Gastrocnemius medialis (tissue), 4 donors: ENCODE measurements at regions of chr2 and their contacts with region 1.

Region 1: GRCh38 chr2:72579591-72580180 is 246.1 kb downstream of the EXOC6B start:
- DNase-seq: no peak
- ATAC-seq: peak in 1 of 2 donors; percentile 71
- H3K4me3 ChIP-seq: no peak overlapping the region
- H3K27ac ChIP-seq: no peak overlapping the region
- H3K4me1 ChIP-seq: peaks cover 0 to 9% of the 10 kb centered on the region in 2 donors
- H3K27me3 ChIP-seq: no peaks in the 10 kb centered on the region
- CTCF ChIP-seq: peak in 4 of 5 experiments; percentile 50 to 70 (median 59)
- POLR2A ChIP-seq: no peak

Region 2: DNA sequence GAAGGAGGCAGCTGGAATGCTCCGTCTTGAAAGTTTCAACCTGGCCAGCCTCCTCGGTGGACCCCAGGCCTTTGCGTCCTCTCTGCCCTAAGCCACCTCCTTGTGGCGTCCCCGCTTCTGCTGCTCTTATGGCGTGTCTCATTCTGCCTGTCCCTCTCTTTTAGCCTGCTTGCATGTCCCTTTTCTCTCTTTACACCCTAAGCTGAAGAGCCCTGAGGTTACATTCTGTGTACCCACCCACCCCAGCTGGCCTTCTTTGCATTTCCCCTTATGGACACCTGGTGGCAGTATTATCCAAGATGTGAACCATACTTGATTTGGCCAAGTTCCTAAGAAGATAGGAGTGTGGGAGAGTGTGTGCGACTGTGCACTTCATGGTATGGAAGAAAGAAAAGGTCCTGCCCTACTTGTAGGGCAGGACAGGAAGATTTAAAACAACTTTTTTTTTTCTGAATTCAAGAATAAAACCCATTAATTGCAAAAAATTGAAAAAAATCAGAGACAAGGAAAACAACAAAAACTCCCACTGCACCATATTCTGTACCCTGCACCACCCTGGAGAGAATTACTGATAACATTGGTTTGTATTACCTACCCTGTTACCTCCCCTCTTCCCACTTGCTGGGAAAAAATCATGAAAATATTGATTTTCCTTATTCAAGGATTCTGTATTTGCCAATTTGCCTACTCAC is 1048.9 kb before region 1 on chr2:
- in situ Hi-C with region 1: loop called in 1 of 4 experiments (anchors 25 kb)
- intact Hi-C with region 1: loop called (anchors 5 kb)
- DNase-seq: peak in 1 of 2 donors; percentile 21
- ATAC-seq: peak; percentile 46 to 73
- H3K4me3 ChIP-seq: no peak overlapping the region
- H3K27ac ChIP-seq: no peak overlapping the region
- H3K4me1 ChIP-seq: no peaks in the 10 kb centered on the region
- H3K27me3 ChIP-seq: no peaks in the 10 kb centered on the region
- CTCF ChIP-seq: peak; percentile 41 to 69 (median 59)
- POLR2A ChIP-seq: no peak

Region 3: DNA sequence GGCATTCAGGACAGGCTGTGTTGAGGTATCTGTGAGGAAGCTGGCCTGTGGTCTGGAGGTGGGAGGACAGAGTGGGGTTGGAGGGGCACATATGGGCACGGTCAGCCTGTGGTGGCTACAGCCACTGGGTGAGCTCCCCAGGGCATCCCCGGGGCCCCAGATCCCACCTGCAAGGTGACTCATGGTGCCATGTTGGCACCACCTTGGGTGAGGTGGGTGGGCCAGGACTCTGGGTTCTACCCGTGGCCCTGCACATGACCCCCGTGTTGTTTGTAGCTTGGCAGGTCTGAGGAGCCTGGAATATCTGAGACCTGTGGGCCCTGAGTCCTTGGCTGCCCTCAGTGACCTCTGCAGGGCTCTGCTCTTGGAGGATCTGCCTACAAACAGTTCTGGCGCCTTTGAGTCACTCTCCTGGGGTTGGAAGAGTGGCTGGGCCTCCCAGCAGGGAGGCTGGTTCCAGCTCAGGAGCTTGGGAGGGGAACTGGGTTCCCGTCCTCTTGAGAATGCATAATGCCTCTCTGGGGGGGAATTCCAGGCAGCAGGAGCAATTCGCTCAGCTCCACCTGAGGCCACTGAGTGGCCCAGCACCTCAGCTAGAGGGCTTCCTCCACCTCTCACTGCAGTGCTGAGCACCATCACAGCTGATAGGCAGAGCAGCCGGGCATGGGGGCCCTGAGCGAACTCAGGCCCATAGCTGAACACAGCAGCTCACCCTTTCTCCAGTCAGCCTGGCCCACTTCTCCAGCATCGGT is 1021.2 kb before region 1 on chr2:
- in situ Hi-C with region 1: loop called in 2 of 4 experiments (anchors 25 kb)
- intact Hi-C with region 1: no loop called
- DNase-seq: no peak
- ATAC-seq: no peak
- H3K4me3 ChIP-seq: no peak overlapping the region
- H3K27ac ChIP-seq: no peak overlapping the region
- H3K4me1 ChIP-seq: peaks cover 0 to 7% of the 10 kb centered on the region in 2 donors
- H3K27me3 ChIP-seq: no peaks in the 10 kb centered on the region
- CTCF ChIP-seq: no peak
- POLR2A ChIP-seq: no peak

Region 4: DNA sequence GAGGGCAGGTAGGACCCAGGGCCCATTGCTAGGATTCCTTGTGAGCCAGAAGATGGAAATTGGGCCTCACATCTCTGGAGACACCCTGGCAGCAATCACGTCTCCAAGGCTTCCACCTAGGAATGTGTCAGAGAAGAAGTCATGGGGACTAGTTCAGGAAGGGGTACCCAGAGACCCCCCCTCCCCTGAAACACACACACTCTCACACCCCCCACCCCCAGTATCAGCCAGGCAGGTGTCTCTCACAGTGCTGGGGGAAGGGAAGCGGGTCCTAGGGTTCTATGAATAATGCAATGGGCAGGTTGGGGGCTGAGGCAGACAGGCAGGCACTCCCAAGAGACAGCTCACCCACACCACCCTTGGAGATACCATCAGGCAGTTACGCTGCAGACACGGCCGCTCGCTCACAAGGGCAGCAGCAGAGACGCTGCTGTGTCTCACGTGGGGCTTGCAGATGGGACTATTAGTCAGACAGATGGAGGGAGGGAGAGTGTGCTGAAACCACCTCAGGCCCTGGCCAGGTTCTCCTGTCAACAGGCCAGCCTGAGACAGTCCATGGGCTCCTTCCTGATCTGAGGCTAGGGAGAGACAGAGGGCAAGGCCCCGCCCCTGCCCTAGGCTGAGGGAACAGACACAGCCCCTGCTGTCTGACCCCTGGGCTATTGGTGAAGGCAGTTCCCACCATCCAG is 566.7 kb before region 1 on chr2:
- in situ Hi-C with region 1: no loop called
- intact Hi-C with region 1: no loop called
- DNase-seq: no peak
- ATAC-seq: no peak
- H3K4me3 ChIP-seq: no peak overlapping the region
- H3K27ac ChIP-seq: no peak overlapping the region
- H3K4me1 ChIP-seq: no peaks in the 10 kb centered on the region
- H3K27me3 ChIP-seq: no peaks in the 10 kb centered on the region
- CTCF ChIP-seq: no peak
- POLR2A ChIP-seq: no peak